AG04449 (cell line): ENCODE measurements at regions of chr4 and their contacts with region 1.

Region 1: GRCh38 chr4:139099366-139099982 is 77.5 kb downstream of the ELF2 start:
- DNase-seq: no peak
- H3K4me3 ChIP-seq: no peak overlapping the region
- CTCF ChIP-seq: peak; percentile 85

Region 2: DNA sequence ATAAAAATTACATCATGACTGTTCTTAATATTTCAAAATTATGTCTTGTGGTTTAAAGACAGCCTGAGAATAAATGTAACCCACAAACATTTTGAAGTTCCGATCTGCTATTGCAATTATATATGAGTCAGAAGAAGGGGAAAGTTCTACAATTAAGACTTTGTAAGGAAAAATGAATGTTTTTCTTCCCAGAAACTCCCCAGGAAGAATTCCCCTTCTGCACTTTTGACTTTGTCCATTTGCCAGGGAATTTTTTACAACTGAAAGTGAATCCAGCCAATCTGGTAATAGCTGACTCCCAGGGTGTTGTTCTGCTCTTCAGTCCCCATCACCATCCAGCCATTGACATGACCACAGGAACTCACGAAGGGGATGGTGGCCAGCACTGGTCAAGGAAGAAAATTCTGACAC is 145.5 kb before region 1 on chr4:
- CTCF ChIA-PET with region 1: no interaction called
- POLR2A ChIA-PET with region 1: no interaction called
- DNase-seq: peak; percentile 94
- H3K4me3 ChIP-seq: no peak overlapping the region
- CTCF ChIP-seq: no peak

Region 3: GRCh38 chr4:139011225-139011950 is 88.1 kb before region 1 on chr4:
- CTCF ChIA-PET with region 1: no interaction called
- POLR2A ChIA-PET with region 1: no interaction called
- DNase-seq: no peak
- H3K4me3 ChIP-seq: no peak overlapping the region
- CTCF ChIP-seq: no peak

Region 4: DNA sequence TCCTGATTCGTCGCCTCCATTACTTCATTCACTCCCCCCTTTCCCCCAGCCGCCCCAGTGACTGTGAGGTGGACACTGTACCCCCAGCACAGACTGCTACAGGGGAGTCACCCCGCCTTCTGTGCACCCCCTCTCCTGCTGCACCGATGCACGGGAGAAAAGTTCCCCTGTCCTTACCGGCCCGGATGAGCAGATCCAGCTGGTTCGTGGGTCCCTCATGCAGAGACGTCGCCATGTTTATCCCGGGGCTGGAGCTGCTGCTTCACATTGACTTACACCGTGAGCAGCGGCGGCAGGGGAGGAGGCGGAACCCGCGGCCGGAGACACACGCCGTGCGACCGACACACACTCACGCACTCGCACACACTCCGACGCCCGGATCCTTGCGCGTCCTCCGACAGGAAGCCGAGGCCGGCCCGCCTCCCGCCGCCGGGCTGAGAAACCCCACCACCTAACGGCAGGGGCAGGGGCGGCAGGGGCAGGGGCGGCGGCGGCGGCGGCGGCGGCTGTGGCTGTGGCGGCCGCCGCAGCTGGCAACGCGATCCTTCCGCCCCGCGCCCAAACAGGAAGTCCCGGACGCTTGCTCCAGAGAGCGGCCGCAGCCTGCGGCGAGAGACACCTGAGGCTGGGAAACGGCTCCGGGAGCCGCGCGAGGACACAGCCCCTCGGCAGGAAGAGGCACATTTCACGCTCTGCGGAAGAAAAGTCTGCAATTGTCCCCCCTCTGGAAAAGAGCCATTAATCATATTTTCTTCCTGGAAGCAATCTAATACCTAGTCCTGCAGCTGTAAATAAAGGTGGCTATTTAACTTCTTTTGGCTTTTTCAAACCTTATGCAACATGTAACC is 15.3 kb before region 1 on chr4:
- CTCF ChIA-PET with region 1: interaction called, 37 read pairs
- POLR2A ChIA-PET with region 1: no interaction called
- DNase-seq: peak; percentile 49
- H3K4me3 ChIP-seq: peak overlapping the region; percentile 93
- CTCF ChIP-seq: peak; percentile 32

Region 5: DNA sequence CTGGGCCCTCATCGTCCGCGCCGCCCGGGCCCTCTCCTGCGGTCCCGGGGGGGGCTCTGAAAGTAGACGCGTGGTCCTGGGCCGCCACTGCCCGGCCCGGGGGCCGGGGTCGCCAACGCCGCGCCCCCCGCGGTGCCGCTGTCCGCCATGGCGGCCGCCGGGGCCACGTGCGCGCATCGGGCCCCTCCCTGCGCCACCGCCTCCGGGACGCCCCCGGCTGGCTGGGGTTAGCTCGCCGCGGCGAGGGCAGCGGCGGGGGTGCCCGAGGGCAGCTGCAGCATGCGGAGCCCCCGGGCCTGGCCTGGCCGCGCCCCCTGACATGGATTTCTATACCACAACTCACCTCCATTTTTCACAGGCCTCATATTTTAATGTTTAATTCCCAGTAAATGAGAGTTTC is 15.8 kb after region 1 on chr4:
- CTCF ChIA-PET with region 1: interaction called, 102 read pairs
- POLR2A ChIA-PET with region 1: no interaction called
- DNase-seq: no peak
- H3K4me3 ChIP-seq: no peak overlapping the region
- CTCF ChIP-seq: no peak

Region 6: DNA sequence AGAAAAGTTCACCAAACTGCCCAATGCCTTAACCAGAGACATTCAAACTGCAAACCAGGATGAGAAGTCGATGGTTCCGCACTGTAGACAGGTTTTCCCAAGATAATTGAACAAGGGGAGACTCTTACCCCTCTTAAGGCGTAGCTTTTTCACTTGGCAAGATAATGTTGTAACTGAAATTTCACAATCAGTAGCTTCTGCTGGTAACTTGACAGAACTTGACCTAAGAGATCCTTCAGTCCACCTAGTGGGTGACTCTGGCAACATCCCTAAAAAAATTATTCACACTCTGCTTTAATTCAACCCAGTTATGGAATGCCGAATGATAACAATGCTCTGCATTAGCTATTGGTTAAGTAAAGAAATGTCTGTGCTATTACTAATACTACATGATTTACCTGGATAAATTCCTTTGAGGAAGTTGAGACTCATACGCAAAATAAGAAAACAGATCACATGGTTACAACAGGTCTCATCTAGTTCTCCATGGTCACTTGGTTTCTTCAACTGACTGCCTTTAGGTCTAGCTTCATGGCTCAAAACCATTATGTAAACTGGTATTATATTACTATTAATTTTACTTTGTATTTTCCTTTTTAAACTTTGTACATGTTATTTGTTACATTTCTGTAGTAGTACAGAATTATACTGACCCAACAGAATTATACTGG is 68.4 kb after region 1 on chr4:
- CTCF ChIA-PET with region 1: interaction called, 36 read pairs
- POLR2A ChIA-PET with region 1: interaction called, 3 read pairs
- DNase-seq: no peak
- H3K4me3 ChIP-seq: no peak overlapping the region
- CTCF ChIP-seq: peak; percentile 39